Adrenal gland (tissue), 19 donors: ENCODE measurements at regions of chr10 and their contacts with region 1.

Region 1: DNA sequence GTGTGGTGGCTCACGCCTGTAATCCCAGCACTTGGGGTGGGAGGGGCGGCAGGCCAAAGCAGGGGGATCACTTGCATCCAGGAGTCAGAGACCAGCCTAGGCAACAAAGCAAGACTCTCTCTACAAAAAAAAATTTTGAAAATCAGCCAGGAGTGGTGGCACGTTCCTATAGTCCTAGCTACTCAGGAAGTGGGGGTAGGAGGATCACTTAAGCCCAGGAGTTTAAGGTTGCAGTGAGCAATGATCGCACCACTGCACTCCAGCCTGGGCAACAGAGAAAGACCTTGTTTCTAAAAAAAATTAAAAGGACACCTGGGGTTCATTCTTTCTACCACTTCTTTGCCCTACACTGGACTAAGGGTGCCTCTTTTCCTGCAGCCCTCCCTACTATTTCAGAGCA is 15.1 kb downstream of the WAPL start:
- DNase-seq: no peak
- H3K4me3 ChIP-seq: no peak overlapping the region
- H3K27ac ChIP-seq: no peak overlapping the region
- H3K4me1 ChIP-seq: peaks cover 0 to 10% of the 10 kb centered on the region in 2 donors
- H3K27me3 ChIP-seq: no peaks in the 10 kb centered on the region
- CTCF ChIP-seq: no peak
- POLR2A ChIP-seq: no peak

Region 2: DNA sequence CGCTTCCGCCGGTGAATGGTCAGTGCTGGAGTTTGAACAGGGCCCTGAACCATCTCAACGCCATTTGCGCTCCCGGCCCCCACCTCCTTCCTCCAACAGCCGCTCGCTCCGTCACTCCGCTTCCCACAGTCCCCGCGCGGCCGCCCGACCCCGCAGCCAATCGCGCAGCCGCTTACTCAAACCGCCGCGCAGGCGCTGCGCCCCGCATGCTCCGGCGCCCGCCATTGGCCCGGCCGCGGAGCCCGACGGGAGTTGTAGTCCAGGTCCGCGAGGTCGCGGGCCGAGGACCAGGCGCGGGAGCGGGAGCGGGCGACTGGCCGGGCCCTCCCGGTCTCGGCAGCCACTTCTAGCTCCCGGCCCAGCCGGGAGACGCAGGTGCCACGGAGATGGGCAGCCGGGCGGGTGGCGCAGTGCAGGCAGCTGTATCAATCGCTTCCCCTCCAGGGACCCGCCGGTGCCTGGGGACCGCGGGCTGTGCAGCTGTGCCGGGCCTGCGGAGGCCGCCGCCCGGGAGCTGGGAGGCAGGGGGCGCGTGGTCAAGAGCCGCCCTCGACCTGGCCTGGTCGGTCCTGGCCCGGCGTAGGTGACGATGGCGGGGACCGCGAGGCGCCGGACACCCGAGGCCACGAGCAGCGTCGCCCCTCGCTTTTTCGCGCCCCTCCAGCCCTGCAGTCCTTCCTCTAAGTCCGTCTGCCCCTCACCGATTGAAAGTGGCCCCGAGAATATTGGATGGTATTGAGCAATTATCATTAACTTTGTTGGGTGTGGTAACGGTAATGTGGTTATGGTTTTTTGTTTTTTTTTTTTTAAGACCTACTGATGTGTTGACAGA is 15.4 kb after region 1 on chr10 and contains the start of gene WAPL:
- intact Hi-C with region 1: loop called in 1 of 2 experiments (anchors 2 kb)
- DNase-seq: peak; percentile 93 to 97 (median 96)
- H3K4me3 ChIP-seq: peak within 1 kb of the TSS; percentile 59 to 97 (median 90)
- H3K27ac ChIP-seq: peak within 1 kb of the TSS; percentile 87 to 97 (median 97)
- H3K4me1 ChIP-seq: peaks cover 20 to 53% of the 10 kb centered on the region in 2 donors
- H3K27me3 ChIP-seq: no peaks in the 10 kb centered on the region
- CTCF ChIP-seq: no peak
- POLR2A ChIP-seq: peak in 1 of 2 donors; percentile 90
- total RNA-seq, gene WAPL: 20.5 to 44.5 (median 31.6) TPM

Region 3: DNA sequence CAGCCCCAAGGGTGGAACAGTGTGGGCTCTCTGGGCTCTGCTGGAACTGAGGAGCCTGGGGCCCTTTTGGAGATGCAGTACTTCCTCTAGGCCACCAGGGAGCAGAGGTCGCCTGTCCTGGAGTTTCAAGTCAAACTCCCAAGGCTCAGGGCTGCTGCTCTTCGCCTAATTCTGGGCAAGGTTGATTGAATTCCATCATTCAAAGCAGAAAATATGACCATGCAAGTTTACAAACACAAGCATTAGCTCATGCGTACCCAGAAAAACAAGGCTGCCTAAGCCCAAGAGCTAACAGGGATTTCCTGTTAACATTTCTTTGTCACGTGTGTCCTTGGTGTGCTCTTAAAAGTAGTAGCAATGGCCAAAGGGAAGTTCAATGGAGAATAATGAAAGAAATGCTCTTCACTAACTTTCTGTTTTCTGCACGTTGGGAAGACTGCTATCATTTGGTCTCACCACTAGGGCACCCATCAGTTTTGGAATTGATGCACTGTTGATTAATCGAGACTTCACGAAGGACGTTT is 182.0 kb after region 1 on chr10:
- intact Hi-C with region 1: no loop called
- DNase-seq: peak; percentile 51 to 83 (median 73)
- H3K4me3 ChIP-seq: no peak overlapping the region
- H3K27ac ChIP-seq: no peak overlapping the region
- H3K4me1 ChIP-seq: peaks cover 0 to 6% of the 10 kb centered on the region in 2 donors
- H3K27me3 ChIP-seq: no peaks in the 10 kb centered on the region
- CTCF ChIP-seq: peak; percentile 82 to 91 (median 90)
- POLR2A ChIP-seq: no peak

Region 4: DNA sequence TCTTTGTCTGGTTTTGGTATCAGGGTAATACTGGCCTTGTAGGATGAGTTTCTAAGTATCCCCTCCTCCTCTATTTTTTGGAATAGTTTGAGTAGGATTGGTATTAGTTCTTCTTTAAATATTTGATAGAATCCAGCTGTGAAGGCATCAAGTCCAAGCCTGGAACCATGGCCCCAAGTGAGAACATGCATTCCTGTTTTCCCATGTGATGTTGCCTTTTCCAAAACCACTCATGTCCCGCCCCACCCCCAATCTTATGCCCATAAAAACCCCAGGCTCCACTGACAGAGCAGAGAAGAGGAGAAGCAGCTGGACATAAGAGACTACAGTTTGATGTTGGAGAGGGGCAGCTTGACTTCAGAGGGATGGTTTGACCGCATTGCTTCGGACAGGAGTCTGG is 1069.4 kb after region 1 on chr10:
- intact Hi-C with region 1: no loop called
- DNase-seq: no peak
- H3K4me3 ChIP-seq: no peak overlapping the region
- H3K27ac ChIP-seq: no peak overlapping the region
- H3K4me1 ChIP-seq: peaks cover 0 to 9% of the 10 kb centered on the region in 2 donors
- H3K27me3 ChIP-seq: no peaks in the 10 kb centered on the region
- CTCF ChIP-seq: no peak
- POLR2A ChIP-seq: no peak